ENCODE measurements at regions of chr1 and their contacts with region 1.

Region 1: GRCh38 chr1:116737020-116737854 is 17.0 kb upstream of the CD2 start:
- DNase-seq: peak; percentile 87
- ATAC-seq: peak; percentile 49
- H3K4me3 Mint-ChIP-seq: peak overlapping the region; percentile 71
- H3K27ac Mint-ChIP-seq: peak overlapping the region; percentile 97
- H3K4me1 Mint-ChIP-seq: peaks cover 61% of the 10 kb centered on the region
- H3K27me3 Mint-ChIP-seq: no peaks in the 10 kb centered on the region

Region 2: DNA sequence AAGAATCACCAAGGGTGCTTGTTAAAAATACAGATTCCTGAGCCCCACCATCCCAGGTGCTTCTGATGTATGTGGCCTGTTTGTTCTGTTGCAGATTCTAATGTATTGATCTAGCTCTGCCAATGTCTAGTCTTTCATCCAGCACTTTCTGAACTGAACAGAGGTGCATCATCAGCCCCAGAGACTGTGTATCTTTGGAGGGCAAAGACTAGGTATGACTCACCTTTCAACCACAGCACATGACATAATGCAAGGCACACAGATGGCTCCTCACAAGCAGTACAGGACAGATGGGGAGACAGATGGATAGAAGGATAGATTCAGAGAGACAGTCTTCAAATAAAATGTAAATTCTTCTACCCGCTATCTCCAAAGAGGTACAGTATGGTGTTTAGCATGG is 198.7 kb before region 1 on chr1:
- CTCF ChIA-PET with region 1: no interaction called
- POLR2A ChIA-PET with region 1: no interaction called
- DNase-seq: peak; percentile 62
- ATAC-seq: peak; percentile 96
- H3K4me3 Mint-ChIP-seq: no peak overlapping the region
- H3K27ac Mint-ChIP-seq: peak overlapping the region; percentile 48
- H3K4me1 Mint-ChIP-seq: peaks cover 37% of the 10 kb centered on the region
- H3K27me3 Mint-ChIP-seq: no peaks in the 10 kb centered on the region

Region 3: GRCh38 chr1:116666187-116666798 is 70.9 kb before region 1 on chr1:
- CTCF ChIA-PET with region 1: no interaction called
- POLR2A ChIA-PET with region 1: no interaction called
- DNase-seq: no peak
- ATAC-seq: no peak
- H3K4me3 Mint-ChIP-seq: peak overlapping the region; percentile 68
- H3K27ac Mint-ChIP-seq: no peak overlapping the region
- H3K4me1 Mint-ChIP-seq: peaks cover 22% of the 10 kb centered on the region
- H3K27me3 Mint-ChIP-seq: peaks cover 75% of the 10 kb centered on the region

Region 4: GRCh38 chr1:116711263-116711840 is 25.9 kb before region 1 on chr1:
- CTCF ChIA-PET with region 1: no interaction called
- POLR2A ChIA-PET with region 1: no interaction called
- DNase-seq: no peak
- ATAC-seq: no peak
- H3K4me3 Mint-ChIP-seq: no peak overlapping the region
- H3K27ac Mint-ChIP-seq: no peak overlapping the region
- H3K4me1 Mint-ChIP-seq: peaks cover 6% of the 10 kb centered on the region
- H3K27me3 Mint-ChIP-seq: peaks cover 4% of the 10 kb centered on the region

Region 5: DNA sequence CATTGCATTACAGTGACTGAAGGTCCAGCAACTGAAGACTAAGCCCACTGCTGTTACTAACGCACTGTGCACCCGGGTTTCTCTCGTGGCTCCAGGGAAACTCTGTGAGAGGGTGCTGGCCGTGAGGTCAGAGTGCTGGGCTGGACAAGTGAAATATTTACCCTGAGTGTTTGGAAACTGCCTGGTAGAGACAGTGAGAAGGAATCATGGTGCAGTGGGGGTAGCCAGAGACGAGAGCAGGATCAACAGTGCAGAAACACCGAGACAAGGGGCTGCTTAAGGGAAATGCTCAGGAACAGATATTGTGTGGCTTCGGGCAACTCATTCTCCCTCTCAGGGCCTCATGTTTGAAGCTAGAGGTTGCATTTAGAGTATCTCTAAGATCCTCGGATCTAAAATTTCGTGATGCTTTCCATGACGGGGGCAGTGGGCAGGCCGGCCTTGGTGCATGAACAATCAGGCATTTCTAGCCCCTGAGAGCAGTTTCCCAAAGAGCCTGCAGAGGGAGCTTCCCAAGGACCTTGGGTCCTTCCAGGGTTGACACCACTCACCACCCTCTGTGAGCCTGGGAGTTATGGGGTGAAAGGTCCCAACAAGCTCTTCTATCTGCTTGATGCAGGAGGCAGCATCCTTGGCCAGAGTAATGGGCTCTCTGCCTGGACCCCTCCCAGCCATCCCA is 26.7 kb after region 1 on chr1:
- CTCF ChIA-PET with region 1: interaction called, 146 read pairs
- POLR2A ChIA-PET with region 1: interaction called, 548 read pairs
- DNase-seq: peak; percentile 74
- ATAC-seq: peak; percentile 21
- H3K4me3 Mint-ChIP-seq: peak overlapping the region; percentile 79
- H3K27ac Mint-ChIP-seq: peak overlapping the region; percentile 99
- H3K4me1 Mint-ChIP-seq: peaks cover 97% of the 10 kb centered on the region
- H3K27me3 Mint-ChIP-seq: no peaks in the 10 kb centered on the region

Region 6: DNA sequence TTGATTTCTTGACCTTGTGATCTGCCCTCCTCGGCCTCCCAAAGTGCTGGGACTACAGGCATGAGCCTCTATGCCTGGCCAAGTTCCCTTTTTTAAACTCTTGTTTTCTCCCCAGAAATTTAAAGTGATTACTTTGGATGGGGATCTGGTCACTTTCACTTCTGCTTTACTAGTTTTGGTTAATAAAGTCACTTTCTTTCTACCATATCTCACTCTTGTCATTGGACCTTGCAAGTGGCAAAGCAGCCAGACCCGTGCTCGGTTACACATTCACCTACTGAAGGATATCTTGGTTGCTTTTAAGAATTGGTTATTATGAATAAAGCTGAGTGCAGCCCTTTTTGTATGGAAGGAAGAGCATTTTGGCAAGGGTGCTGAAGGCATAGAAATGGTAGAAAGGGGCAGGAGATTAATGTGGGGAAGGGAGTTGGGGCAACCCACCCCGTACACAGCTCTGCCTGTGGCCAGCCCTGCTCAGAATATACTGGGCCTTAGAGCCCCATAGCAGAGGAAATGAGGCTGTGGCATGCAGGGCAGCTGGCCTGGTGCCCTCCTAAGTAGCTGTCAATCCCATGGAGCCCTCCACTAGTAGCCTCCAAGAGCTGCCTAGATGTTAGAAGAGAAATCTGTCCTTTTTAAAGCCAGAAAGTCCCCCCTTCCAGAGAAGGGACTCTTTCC is 57.7 kb after region 1 on chr1:
- CTCF ChIA-PET with region 1: interaction called, 19 read pairs
- POLR2A ChIA-PET with region 1: interaction called, 3 read pairs
- DNase-seq: no peak
- ATAC-seq: no peak
- H3K4me3 Mint-ChIP-seq: no peak overlapping the region
- H3K27ac Mint-ChIP-seq: no peak overlapping the region
- H3K4me1 Mint-ChIP-seq: peaks cover 73% of the 10 kb centered on the region
- H3K27me3 Mint-ChIP-seq: no peaks in the 10 kb centered on the region

Region 7: DNA sequence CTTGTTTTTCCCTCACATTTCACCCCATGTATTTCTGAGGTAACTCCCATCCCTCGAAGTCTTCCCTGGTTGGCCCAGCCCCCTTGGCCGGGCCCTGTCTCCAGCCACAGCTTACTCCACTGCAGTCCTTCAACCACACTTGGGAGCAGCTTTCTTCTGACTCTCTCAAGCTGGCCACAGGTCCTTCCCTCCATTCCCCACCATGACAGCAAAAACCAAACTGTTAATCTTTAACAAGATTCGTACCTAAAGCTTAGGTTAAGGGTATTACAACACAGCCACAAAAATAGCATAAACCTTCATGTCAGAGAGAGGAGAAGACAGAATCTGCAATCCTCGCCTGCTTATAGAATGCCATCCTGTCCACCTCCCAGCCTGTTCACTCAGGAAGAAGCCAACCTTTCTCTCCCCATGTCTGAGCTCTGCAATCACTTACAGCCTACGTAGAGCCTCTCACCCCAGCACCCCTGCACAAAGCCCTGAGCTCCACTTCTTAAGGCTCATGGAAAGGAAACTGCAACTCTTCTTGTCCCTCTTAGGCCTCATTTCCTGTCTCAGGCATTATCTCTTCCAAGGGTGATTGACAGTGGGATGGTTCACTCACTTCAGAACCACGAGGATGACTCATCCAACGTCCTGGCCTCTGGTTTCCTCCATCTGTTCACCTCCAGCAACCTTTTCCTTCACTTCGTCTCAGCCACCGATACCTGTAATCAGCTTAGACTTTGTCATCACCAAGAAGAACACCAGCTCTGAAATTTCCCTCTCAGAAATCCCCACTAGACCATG is 89.8 kb after region 1 on chr1:
- CTCF ChIA-PET with region 1: interaction called, 21 read pairs
- POLR2A ChIA-PET with region 1: interaction called, 7 read pairs
- DNase-seq: peak; percentile 78
- ATAC-seq: peak; percentile 88
- H3K4me3 Mint-ChIP-seq: peak overlapping the region; percentile 52
- H3K27ac Mint-ChIP-seq: peak overlapping the region; percentile 94
- H3K4me1 Mint-ChIP-seq: peaks cover 49% of the 10 kb centered on the region
- H3K27me3 Mint-ChIP-seq: no peaks in the 10 kb centered on the region

Region 8: GRCh38 chr1:117051224-117052064 is 314.2 kb after region 1 on chr1:
- CTCF ChIA-PET with region 1: interaction called, 29 read pairs
- POLR2A ChIA-PET with region 1: interaction called, 7 read pairs
- DNase-seq: peak; percentile 65
- ATAC-seq: peak; percentile 69
- H3K4me3 Mint-ChIP-seq: peak overlapping the region; percentile 78
- H3K27ac Mint-ChIP-seq: peak overlapping the region; percentile 94
- H3K4me1 Mint-ChIP-seq: peaks cover 64% of the 10 kb centered on the region
- H3K27me3 Mint-ChIP-seq: no peaks in the 10 kb centered on the region